Common myeloid progenitor, CD34-positive (primary cell): ENCODE measurements at regions of chr9 and their contacts with region 1.

Region 1: GRCh38 chr9:33374634-33375213 is 27.6 kb downstream of the AQP7 start:
- DNase-seq: peak; percentile 75 to 86 (median 81)
- H3K4me3 ChIP-seq: peak overlapping the region in 4 of 7 experiments; percentile 26 to 65 (median 52)
- H3K27ac ChIP-seq: peak overlapping the region in 1 of 2 experiments; percentile 60
- H3K4me1 ChIP-seq: peaks cover 0 to 13% (median 9%) of the 10 kb centered on the region in 4 experiments
- H3K27me3 ChIP-seq: no peaks in the 10 kb centered on the region

Region 2: DNA sequence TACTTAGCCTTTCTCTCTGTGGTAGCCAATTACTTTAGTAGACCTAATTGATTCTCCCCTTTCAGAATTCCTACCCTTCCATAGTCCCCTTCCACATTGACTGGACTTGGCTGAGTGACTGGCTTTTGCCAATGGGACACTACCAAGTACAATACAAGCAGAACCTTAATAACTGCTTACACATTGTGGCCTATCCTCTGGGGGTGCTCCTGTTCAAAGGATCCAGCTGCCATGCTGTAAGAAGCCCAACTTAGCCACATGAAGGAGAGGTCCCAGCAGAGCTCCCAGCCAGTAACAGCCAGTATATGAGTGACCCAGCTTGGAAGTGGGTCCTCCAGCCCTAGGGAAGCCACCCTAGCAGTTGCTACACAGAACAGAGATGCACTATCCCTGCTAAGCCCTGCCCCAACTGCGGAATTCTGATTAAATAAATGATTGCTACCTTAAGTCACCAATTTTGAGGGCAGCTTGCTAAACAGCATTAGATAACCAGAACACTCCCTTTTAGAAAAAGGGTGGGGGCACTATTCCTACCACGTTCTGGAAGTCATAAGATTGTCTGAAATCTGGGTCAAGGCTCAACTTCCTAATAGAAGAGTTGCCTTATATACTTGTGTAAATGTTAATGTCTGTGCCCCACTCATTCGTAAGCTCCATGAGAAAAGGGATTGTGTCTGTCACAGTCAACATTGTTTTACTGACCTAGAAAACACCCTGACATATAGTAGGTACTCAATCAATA is 362.2 kb before region 1 on chr9:
- CTCF ChIA-PET with region 1: no interaction called
- POLR2A ChIA-PET with region 1: no interaction called
- DNase-seq: no peak
- H3K4me3 ChIP-seq: no peak overlapping the region
- H3K27ac ChIP-seq: no peak overlapping the region
- H3K4me1 ChIP-seq: no peaks in the 10 kb centered on the region
- H3K27me3 ChIP-seq: no peaks in the 10 kb centered on the region

Region 3: DNA sequence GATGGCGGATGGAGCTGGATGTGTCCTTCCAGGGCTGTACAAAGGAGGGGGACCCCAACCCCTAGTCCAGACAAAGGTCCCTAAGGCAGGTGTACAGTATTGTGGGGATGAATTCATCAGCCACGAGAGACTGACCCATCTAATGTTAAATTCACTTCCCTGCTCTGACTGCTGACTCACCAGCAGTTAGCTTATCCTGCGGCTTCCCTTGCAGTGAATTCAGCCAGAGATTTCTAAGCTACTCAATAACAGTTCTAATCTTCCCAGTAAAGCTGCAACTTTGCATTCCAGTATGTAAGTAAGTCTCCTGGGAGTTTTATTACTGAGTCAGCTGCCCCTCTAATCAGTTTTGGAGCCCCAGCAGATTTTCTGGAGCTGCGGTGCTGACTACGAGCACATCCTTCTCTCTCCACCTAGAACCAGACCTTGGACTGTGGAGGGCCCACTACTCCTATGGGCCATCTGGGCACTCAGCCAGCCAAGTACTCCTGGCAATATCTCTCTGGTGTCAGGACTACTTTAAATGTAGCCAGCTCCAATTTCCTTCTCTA is 223.6 kb before region 1 on chr9:
- CTCF ChIA-PET with region 1: no interaction called
- POLR2A ChIA-PET with region 1: no interaction called
- DNase-seq: peak; percentile 36 to 76 (median 62)
- H3K4me3 ChIP-seq: peak overlapping the region in 1 of 7 experiments; percentile 36
- H3K27ac ChIP-seq: peak overlapping the region in 1 of 2 experiments; percentile 57
- H3K4me1 ChIP-seq: peaks cover 28 to 56% (median 31%) of the 10 kb centered on the region in 4 experiments
- H3K27me3 ChIP-seq: no peaks in the 10 kb centered on the region

Region 4: GRCh38 chr9:33294670-33295432 is 79.9 kb before region 1 on chr9:
- CTCF ChIA-PET with region 1: no interaction called
- POLR2A ChIA-PET with region 1: no interaction called
- DNase-seq: no peak
- H3K4me3 ChIP-seq: no peak overlapping the region
- H3K27ac ChIP-seq: peak overlapping the region in 1 of 2 experiments; percentile 40
- H3K4me1 ChIP-seq: peaks cover 35 to 61% (median 56%) of the 10 kb centered on the region in 4 experiments
- H3K27me3 ChIP-seq: no peaks in the 10 kb centered on the region

Region 5: DNA sequence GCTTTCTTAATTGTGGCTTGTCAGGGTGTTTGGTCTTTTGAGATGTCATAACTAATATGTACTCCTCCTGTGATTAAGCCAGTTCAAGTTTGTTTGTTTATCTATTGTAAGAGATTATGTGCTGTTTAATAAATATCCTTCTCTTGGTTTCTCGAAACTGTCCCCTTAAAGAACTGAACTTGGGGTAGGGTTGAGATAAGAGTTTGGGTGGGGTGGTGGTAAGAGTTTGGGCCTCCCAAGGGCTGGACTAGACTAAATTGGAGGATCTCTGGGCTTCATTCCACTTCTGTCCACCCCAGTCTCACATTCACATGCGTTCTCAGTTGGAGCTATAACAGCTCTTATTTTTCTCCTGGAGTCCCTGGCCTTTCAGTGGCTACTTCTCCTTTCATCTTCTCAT is 10.6 kb before region 1 on chr9:
- CTCF ChIA-PET with region 1: interaction called, 22 read pairs
- POLR2A ChIA-PET with region 1: no interaction called
- DNase-seq: no peak
- H3K4me3 ChIP-seq: no peak overlapping the region
- H3K27ac ChIP-seq: no peak overlapping the region
- H3K4me1 ChIP-seq: no peaks in the 10 kb centered on the region
- H3K27me3 ChIP-seq: no peaks in the 10 kb centered on the region

Region 6: DNA sequence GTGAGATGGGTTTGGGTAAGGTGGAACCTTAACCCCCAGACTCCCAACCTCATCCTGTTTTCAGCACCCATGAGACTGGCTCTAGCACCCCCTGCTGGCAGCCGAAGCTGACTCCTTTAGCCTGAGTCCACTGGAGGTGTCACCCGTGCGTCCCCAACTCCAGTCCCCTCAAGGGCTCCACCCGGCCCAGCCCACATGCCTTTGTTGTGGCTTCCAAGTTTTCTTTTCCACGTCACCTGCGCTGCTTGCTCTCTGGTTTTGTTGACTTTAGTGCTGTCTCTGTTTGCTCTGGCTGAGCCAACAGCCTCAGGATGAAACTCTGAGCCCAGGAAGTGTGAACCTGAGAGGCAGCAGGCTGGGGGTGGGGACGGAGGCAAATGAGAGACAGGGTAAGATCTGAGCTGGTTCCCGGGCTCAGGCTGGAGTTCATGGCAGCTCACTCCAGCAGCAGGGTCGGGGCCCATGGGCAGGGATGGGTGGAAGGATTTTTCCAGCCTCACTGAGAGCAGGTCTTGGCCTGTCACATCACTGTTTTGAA is 40.8 kb after region 1 on chr9:
- CTCF ChIA-PET with region 1: interaction called, 27 read pairs
- POLR2A ChIA-PET with region 1: no interaction called
- DNase-seq: peak; percentile 53 to 74 (median 64)
- H3K4me3 ChIP-seq: no peak overlapping the region
- H3K27ac ChIP-seq: no peak overlapping the region
- H3K4me1 ChIP-seq: peaks cover 0 to 10% (median 3%) of the 10 kb centered on the region in 4 experiments
- H3K27me3 ChIP-seq: no peaks in the 10 kb centered on the region

Region 7: DNA sequence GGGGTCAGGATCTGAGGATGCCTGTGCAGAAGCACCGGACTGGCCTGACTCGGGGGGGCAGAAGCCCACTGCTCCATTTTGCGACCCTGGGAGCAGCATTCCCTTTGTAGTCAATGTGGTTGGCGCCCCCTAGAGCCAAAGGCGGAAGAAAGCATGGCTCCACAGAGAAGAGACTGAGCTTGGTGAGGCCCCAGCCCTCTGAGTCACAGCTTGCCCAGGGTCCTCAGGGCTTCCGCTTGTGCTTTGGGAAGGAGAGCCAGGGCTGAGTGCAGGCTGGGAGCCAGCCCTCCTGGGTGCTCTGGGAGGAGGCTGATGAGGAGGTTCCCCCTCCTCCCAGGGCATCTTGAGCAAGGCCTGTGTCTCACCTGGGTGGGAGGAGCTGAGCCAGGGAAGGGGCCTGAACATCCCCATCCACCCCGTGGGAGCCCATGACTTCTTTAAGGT is 78.1 kb after region 1 on chr9:
- CTCF ChIA-PET with region 1: interaction called, 22 read pairs
- POLR2A ChIA-PET with region 1: no interaction called
- DNase-seq: peak; percentile 56 to 65 (median 62)
- H3K4me3 ChIP-seq: no peak overlapping the region
- H3K27ac ChIP-seq: no peak overlapping the region
- H3K4me1 ChIP-seq: peaks cover 0 to 11% (median 7%) of the 10 kb centered on the region in 4 experiments
- H3K27me3 ChIP-seq: peaks cover 0 to 6% (median 2%) of the 10 kb centered on the region in 5 experiments